Pancreas (tissue), 10 donors: ENCODE measurements at regions of chr22 and their contacts with region 1.

Region 1: DNA sequence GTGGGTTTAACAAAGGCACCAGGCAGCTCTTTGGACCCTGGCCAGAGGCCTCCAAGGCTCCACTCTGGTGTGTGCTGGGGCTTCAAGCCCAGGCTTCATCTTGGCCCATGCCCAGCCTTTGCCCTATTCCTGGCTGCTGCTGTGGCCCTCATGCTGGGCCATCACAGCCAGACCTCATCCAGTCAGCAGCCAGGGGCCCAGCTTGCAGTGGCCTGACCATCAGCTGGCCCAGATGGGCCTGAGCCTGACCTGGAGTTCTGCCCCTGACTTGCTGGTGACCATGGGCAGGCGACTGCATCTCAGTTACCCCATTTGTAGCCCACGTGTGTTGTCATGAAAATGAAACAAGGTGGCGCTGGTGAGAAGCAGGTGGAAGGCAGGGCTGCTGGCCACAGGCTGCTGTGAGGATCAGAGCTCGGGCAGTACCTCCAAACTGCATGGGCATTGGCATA is 76.1 kb downstream of the MED15 start:
- DNase-seq: peak in 2 of 6 donors; percentile 43 to 61
- ATAC-seq: no peak
- H3K4me3 ChIP-seq: no peak overlapping the region
- H3K27ac ChIP-seq: no peak overlapping the region
- H3K4me1 ChIP-seq: peaks cover 0 to 5% (median 0%) of the 10 kb centered on the region in 3 donors
- H3K27me3 ChIP-seq: no peaks in the 10 kb centered on the region
- CTCF ChIP-seq: no peak

Region 2: DNA sequence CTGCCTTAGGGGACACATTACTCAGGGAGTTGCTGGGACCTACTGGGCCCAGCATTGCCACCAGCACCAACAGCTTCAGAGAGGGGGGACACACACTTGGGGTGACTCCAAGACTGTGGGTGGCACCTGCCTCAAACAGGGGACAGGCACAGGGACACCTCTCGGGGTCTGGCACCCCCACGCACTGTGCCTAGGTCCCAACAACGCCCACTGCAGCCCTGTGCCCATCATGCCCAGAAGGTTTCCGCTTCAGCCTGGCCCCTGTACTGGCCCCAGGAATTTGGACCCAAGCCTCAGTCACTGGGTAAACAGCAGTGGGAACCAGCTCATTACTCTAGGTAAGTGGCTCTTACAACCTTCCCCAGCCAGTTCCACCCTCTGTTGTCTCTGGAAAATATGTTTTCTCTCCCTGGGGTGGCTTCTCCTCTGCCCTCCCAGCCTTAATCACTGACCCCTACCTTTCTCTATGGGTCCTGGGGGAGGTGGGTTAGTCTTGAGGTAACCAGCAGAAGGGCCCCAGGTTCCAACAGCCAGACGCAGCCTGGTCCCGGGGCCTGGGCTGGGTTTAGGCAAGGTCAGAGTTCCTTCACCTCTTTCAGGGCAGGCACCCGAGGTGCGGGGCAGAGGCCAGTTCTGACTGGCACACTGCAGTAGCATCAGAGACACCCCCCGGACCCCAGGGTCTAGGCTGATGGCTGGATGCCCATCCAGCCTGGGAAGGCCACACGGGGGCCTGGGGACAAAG is 47.5 kb after region 1 on chr22:
- intact Hi-C with region 1: loop called in 1 of 3 experiments (anchors 5 kb)
- DNase-seq: no peak
- ATAC-seq: no peak
- H3K4me3 ChIP-seq: no peak overlapping the region
- H3K27ac ChIP-seq: no peak overlapping the region
- H3K4me1 ChIP-seq: no peaks in the 10 kb centered on the region
- H3K27me3 ChIP-seq: no peaks in the 10 kb centered on the region
- CTCF ChIP-seq: no peak

Region 3: GRCh38 chr22:20771918-20772625 is 188.6 kb after region 1 on chr22:
- intact Hi-C with region 1: no loop called
- DNase-seq: no peak
- ATAC-seq: no peak
- H3K4me3 ChIP-seq: no peak overlapping the region
- H3K27ac ChIP-seq: no peak overlapping the region
- H3K4me1 ChIP-seq: peaks cover 0 to 12% (median 5%) of the 10 kb centered on the region in 3 donors
- H3K27me3 ChIP-seq: no peaks in the 10 kb centered on the region
- CTCF ChIP-seq: no peak